ENCODE measurements at regions of chr13 and their contacts with region 1.

Region 1: DNA sequence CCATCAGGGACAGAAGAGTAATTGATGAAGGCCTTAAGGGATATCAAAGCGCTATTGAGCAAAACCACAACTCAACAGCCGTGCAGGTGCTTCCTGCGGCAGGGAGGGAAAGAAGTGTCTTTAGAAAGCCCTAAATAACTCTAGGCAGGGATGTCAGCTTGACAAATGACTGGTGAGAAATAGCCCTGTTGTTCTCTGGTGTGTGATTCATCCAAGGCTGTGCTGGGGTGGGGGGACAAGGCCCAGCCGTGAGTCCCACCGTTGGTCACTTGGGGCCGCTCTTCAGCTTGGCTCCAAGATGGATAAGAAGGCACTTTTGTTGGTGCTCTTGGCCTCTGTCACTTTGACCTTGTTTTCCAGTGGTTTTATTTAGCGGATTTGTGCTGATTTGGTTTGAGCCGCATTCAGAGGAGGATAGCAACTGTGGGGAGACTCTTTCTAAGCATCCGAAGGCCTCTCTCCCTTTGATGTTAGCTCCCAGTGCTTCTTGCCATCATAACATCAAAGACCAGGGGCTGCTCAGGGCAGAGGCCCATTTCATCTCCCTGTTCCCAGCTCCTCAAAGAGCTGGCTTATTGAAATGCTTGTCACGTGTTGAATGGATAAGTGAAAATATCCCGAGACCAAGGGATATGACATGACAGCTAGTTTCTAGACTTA is 130.3 kb upstream of the SERP2 start:
- DNase-seq: peak; percentile 78 to 88
- H3K4me3 ChIP-seq: no peak overlapping the region
- H3K27ac ChIP-seq: peak overlapping the region; percentile 58
- H3K4me1 ChIP-seq: peaks cover 16% of the 10 kb centered on the region
- H3K27me3 ChIP-seq: no peaks in the 10 kb centered on the region
- CTCF ChIP-seq: peak; percentile 74

Region 2: DNA sequence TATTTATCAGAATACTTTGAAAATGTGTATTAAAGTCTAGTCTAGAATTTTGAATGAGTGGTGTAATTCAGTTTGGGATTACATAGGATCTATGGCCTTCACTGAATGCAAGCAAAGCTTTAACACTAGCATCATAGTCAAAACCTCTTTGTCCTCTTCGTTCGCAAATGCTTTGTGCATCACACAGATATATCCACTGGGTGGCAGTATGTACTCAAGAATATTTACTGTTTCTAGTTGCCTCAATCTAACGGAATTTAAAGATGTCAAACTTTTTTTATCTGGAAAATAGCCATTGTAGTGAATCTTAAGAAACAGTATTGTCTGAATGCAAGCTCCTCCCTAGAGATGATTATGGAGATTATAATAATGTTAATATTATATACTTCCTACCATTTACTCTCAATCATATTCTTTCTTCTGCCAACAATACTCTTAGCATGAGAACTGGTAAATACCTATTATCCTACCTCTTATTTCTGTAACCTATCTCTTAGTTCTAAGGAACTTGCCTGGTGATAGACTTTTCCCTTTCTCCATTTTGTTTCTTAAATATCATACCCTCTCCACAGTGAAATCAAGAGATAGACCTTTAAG is 337.8 kb before region 1 on chr13:
- CTCF ChIA-PET with region 1: no interaction called
- POLR2A ChIA-PET with region 1: no interaction called
- intact Hi-C with region 1: loop called (anchors 1 kb)
- DNase-seq: peak; percentile 9 to 62
- H3K4me3 ChIP-seq: no peak overlapping the region
- H3K27ac ChIP-seq: no peak overlapping the region
- H3K4me1 ChIP-seq: peaks cover 12% of the 10 kb centered on the region
- H3K27me3 ChIP-seq: no peaks in the 10 kb centered on the region
- CTCF ChIP-seq: peak; percentile 77

Region 3: DNA sequence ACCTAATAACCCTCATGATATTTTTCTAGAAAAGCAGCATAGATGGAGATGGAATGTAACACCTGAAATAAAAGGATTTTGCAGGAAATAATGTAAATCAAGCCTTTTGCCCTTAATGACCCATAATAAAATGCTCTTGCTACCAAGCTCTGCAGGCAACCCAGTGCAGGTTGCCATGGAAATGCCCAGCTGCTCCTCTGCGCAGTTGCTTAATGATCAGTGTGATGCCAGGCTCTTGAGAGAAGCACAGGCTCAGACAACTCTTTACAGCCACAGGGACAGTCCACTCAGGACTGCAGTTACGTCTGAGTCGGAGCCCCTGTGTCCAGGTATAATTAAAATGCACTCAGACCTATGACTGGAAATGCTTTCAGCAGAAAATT is 198.2 kb before region 1 on chr13:
- CTCF ChIA-PET with region 1: interaction called, 15 read pairs
- POLR2A ChIA-PET with region 1: no interaction called
- intact Hi-C with region 1: loop called (anchors 2 kb)
- DNase-seq: no peak
- H3K4me3 ChIP-seq: no peak overlapping the region
- H3K27ac ChIP-seq: no peak overlapping the region
- H3K4me1 ChIP-seq: peaks cover 27% of the 10 kb centered on the region
- H3K27me3 ChIP-seq: no peaks in the 10 kb centered on the region
- CTCF ChIP-seq: no peak

Region 4: GRCh38 chr13:44050450-44051063 is 192.8 kb before region 1 on chr13:
- CTCF ChIA-PET with region 1: interaction called, 15 read pairs
- POLR2A ChIA-PET with region 1: no interaction called
- intact Hi-C with region 1: loop called (anchors 2 kb)
- DNase-seq: no peak
- H3K4me3 ChIP-seq: no peak overlapping the region
- H3K27ac ChIP-seq: no peak overlapping the region
- H3K4me1 ChIP-seq: peaks cover 2% of the 10 kb centered on the region
- H3K27me3 ChIP-seq: no peaks in the 10 kb centered on the region
- CTCF ChIP-seq: peak; percentile 70

Region 5: GRCh38 chr13:44306401-44307192 is 63.3 kb after region 1 on chr13:
- CTCF ChIA-PET with region 1: interaction called, 3 read pairs
- POLR2A ChIA-PET with region 1: interaction called, 13 read pairs
- intact Hi-C with region 1: no loop called
- DNase-seq: peak; percentile 62 to 88
- H3K4me3 ChIP-seq: peak overlapping the region; percentile 47; the same call in 1 of the 2 replicates
- H3K27ac ChIP-seq: peak overlapping the region; percentile 100
- H3K4me1 ChIP-seq: peaks cover 77% of the 10 kb centered on the region
- H3K27me3 ChIP-seq: no peaks in the 10 kb centered on the region
- CTCF ChIP-seq: no peak

Region 6: DNA sequence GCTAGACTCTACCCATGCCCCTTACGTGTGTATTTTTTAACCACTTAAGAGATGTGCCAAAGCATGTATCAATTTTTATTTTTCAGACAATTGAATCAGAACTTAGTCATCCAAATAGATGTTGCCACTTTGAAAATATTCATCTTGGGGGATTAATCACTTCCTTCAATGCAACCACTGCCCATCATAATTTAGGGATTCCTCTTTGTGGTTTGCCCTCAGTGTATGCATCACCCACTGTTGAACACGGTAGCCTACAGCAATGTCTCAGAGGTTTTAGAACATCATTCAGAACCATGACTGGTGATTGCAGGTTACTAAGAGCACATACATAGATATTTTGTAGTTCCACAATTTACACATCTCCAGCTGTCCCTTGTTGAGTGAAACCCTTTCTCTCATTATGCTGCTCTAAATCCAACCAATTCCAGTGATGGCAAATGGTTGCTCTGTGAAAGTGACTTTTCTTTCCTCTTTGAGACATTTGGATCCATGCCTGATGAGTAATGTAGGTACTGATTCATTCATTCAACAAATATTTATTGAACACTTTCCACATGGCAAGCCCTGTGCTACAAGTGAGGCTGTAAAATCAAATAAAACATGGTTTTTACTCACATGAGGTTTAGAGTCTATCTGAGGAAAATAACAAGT is 69.7 kb after region 1 on chr13:
- CTCF ChIA-PET with region 1: no interaction called
- POLR2A ChIA-PET with region 1: no interaction called
- intact Hi-C with region 1: loop called (anchors 2 kb)
- DNase-seq: peak; percentile 33 to 93
- H3K4me3 ChIP-seq: no peak overlapping the region
- H3K27ac ChIP-seq: peak overlapping the region; percentile 99
- H3K4me1 ChIP-seq: peaks cover 70% of the 10 kb centered on the region
- H3K27me3 ChIP-seq: no peaks in the 10 kb centered on the region
- CTCF ChIP-seq: no peak

Region 7: GRCh38 chr13:44364348-44365049 is 121.2 kb after region 1 on chr13:
- CTCF ChIA-PET with region 1: no interaction called
- POLR2A ChIA-PET with region 1: no interaction called
- intact Hi-C with region 1: loop called (anchors 1 kb)
- DNase-seq: peak; percentile 63 to 97
- H3K4me3 ChIP-seq: peak overlapping the region; percentile 36; the same call in 1 of the 2 replicates
- H3K27ac ChIP-seq: peak overlapping the region; percentile 96
- H3K4me1 ChIP-seq: peaks cover 86% of the 10 kb centered on the region
- H3K27me3 ChIP-seq: no peaks in the 10 kb centered on the region
- CTCF ChIP-seq: no peak